B cell (primary cell): ENCODE measurements at regions of chr11 and their contacts with region 1.

Region 1: GRCh38 chr11:61361686-61362541 is at the starts of genes CYB561A3 and TMEM138:
- DNase-seq: peak; percentile 94
- ATAC-seq: peak; percentile 72
- H3K4me3 ChIP-seq: peak within 1 kb of the TSS; percentile 86 to 99 (median 97)
- H3K4me3 Mint-ChIP-seq: peak within 1 kb of the TSS; percentile 99
- H3K27ac ChIP-seq: peak within 1 kb of the TSS; percentile 93
- H3K27ac Mint-ChIP-seq: peak within 1 kb of the TSS; percentile 98
- H3K4me1 ChIP-seq: peaks cover 44 to 50% of the 10 kb centered on the region in 2 donors
- H3K4me1 Mint-ChIP-seq: peaks cover 53% of the 10 kb centered on the region
- H3K27me3 ChIP-seq: no peaks in the 10 kb centered on the region
- H3K27me3 Mint-ChIP-seq: no peaks in the 10 kb centered on the region
- CTCF ChIP-seq: no peak
- total RNA-seq, gene CYB561A3: 248 and 259 TPM in 2 replicates
- total RNA-seq, gene TMEM138: 84.3 and 85.3 TPM in 2 replicates

Region 2: GRCh38 chr11:61912530-61912898 is 550.6 kb after region 1 on chr11:
- CTCF ChIA-PET with region 1: no interaction called
- POLR2A ChIA-PET with region 1: no interaction called
- intact Hi-C with region 1: no loop called
- DNase-seq: peak; percentile 10
- ATAC-seq: no peak
- H3K4me3 ChIP-seq: no peak overlapping the region
- H3K4me3 Mint-ChIP-seq: no peak overlapping the region
- H3K27ac ChIP-seq: no peak overlapping the region
- H3K27ac Mint-ChIP-seq: no peak overlapping the region
- H3K4me1 ChIP-seq: peaks cover under 1 to 7% of the 10 kb centered on the region in 2 donors
- H3K4me1 Mint-ChIP-seq: peaks cover 3% of the 10 kb centered on the region
- H3K27me3 ChIP-seq: peaks cover 0 to 22% (median 6%) of the 10 kb centered on the region in 4 experiments
- H3K27me3 Mint-ChIP-seq: peaks cover 28% of the 10 kb centered on the region
- CTCF ChIP-seq: no peak

Region 3: GRCh38 chr11:62123669-62124185 is 761.8 kb after region 1 on chr11 and contains the start of gene INCENP:
- CTCF ChIA-PET with region 1: no interaction called
- POLR2A ChIA-PET with region 1: no interaction called
- intact Hi-C with region 1: loop called (anchors 10 kb)
- DNase-seq: peak; percentile 97
- ATAC-seq: peak; percentile 99
- H3K4me3 ChIP-seq: peak within 1 kb of the TSS; percentile 71 to 99 (median 93)
- H3K4me3 Mint-ChIP-seq: peak within 1 kb of the TSS; percentile 94
- H3K27ac ChIP-seq: peak within 1 kb of the TSS; percentile 52 to 67
- H3K27ac Mint-ChIP-seq: peak within 1 kb of the TSS; percentile 88
- H3K4me1 ChIP-seq: peaks cover 11 to 16% of the 10 kb centered on the region in 2 donors
- H3K4me1 Mint-ChIP-seq: peaks cover 30% of the 10 kb centered on the region
- H3K27me3 ChIP-seq: peaks cover 0 to 2% (median 0%) of the 10 kb centered on the region in 4 experiments
- H3K27me3 Mint-ChIP-seq: no peaks in the 10 kb centered on the region
- CTCF ChIP-seq: no peak
- total RNA-seq, gene INCENP: 34.0 and 37.8 TPM in 2 replicates